PC-9 (cell line): ENCODE measurements at regions of chr10 and their contacts with region 1.

Region 1: GRCh38 chr10:3067045-3067858 is at the start of gene PFKP:
- DNase-seq: peak in 1 of 2 experiments; percentile 62
- H3K4me3 ChIP-seq: peak within 1 kb of the TSS; percentile 90
- H3K27ac ChIP-seq: no peak within 1 kb of the TSS
- H3K4me1 ChIP-seq: peaks cover 21% of the 10 kb centered on the region; the same call in 1 of the 2 replicates
- H3K27me3 ChIP-seq: no peaks in the 10 kb centered on the region
- CTCF ChIP-seq: no peak
- total RNA-seq, gene PFKP: 222 and 234 TPM in 2 replicates

Region 2: DNA sequence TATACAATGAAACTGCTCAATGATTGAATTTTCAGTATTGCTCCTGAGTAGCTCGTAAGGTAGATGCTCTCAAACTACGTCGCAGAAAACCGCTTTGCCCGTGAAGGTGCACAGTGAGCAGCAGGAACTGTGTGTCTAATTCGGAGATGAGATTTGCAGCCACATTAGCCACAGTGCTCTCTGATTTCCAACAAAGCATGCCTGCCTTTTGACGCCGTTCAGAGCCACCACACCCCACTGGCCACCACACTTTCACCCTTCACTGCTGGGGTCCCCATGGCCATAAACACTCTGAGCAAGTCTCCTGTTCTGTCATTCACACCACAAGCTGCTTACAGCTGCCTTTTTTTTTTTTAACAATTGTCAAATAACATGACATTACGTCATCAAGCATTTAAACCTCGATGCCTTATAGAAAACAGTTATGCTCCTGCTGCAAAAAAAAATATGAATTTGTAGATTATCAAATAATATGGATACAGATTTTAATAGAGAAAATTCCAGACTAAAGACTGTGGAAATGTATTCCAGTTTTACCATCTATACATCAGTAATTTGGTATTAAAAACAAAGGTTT is 578.7 kb before region 1 on chr10:
- CTCF ChIA-PET with region 1: no interaction called
- POLR2A ChIA-PET with region 1: no interaction called
- intact Hi-C with region 1: no loop called
- DNase-seq: no peak
- H3K4me3 ChIP-seq: no peak overlapping the region
- H3K27ac ChIP-seq: no peak overlapping the region
- H3K4me1 ChIP-seq: no peaks in the 10 kb centered on the region
- H3K27me3 ChIP-seq: peaks cover 2% of the 10 kb centered on the region; the same call in 1 of the 2 replicates
- CTCF ChIP-seq: no peak

Region 3: GRCh38 chr10:3095373-3096139 is 28.3 kb after region 1 on chr10:
- CTCF ChIA-PET with region 1: interaction called, 3 read pairs
- POLR2A ChIA-PET with region 1: interaction called, 14 read pairs
- intact Hi-C with region 1: loop called (anchors 1 kb)
- DNase-seq: peak; percentile 68 to 98
- H3K4me3 ChIP-seq: peak overlapping the region; percentile 25; the same call in 1 of the 2 replicates
- H3K27ac ChIP-seq: peak overlapping the region; percentile 99
- H3K4me1 ChIP-seq: peaks cover 54% of the 10 kb centered on the region
- H3K27me3 ChIP-seq: no peaks in the 10 kb centered on the region
- CTCF ChIP-seq: no peak

Region 4: GRCh38 chr10:3107426-3107961 is 40.2 kb after region 1 on chr10:
- CTCF ChIA-PET with region 1: no interaction called
- POLR2A ChIA-PET with region 1: interaction called, 3 read pairs
- intact Hi-C with region 1: loop called (anchors 1 kb)
- DNase-seq: peak in 1 of 2 experiments; percentile 74
- H3K4me3 ChIP-seq: no peak overlapping the region
- H3K27ac ChIP-seq: no peak overlapping the region
- H3K4me1 ChIP-seq: no peaks in the 10 kb centered on the region
- H3K27me3 ChIP-seq: no peaks in the 10 kb centered on the region
- CTCF ChIP-seq: no peak

Region 5: GRCh38 chr10:3172446-3173170 is 105.4 kb after region 1 on chr10 and contains the start of gene PITRM1:
- CTCF ChIA-PET with region 1: no interaction called
- POLR2A ChIA-PET with region 1: interaction called, 4 read pairs
- intact Hi-C with region 1: loop called (anchors 2 kb)
- DNase-seq: peak; percentile 93 to 98
- H3K4me3 ChIP-seq: peak within 1 kb of the TSS; percentile 94
- H3K27ac ChIP-seq: peak within 1 kb of the TSS; percentile 76
- H3K4me1 ChIP-seq: peaks cover 8% of the 10 kb centered on the region
- H3K27me3 ChIP-seq: no peaks in the 10 kb centered on the region
- CTCF ChIP-seq: no peak
- total RNA-seq, gene PITRM1: 92.3 and 124 TPM in 2 replicates